Heart right ventricle (tissue), 16 donors: ENCODE measurements at regions of chr1 and their contacts with region 1.

Region 1: GRCh38 chr1:168439456-168440375 is 104.1 kb downstream of the XCL2 start:
- DNase-seq: peak; percentile 27 to 79
- ATAC-seq: peak; percentile 80 to 92 (median 90)
- H3K4me3 ChIP-seq: peak overlapping the region in 8 of 10 donors; percentile 5 to 38 (median 28)
- H3K27ac ChIP-seq: peak overlapping the region in 1 of 10 donors; percentile 54
- H3K4me1 ChIP-seq: peaks cover 0 to 13% (median 4%) of the 10 kb centered on the region in 9 donors
- H3K27me3 ChIP-seq: no peaks in the 10 kb centered on the region
- CTCF ChIP-seq: peak; percentile 36 to 85 (median 78)

Region 2: DNA sequence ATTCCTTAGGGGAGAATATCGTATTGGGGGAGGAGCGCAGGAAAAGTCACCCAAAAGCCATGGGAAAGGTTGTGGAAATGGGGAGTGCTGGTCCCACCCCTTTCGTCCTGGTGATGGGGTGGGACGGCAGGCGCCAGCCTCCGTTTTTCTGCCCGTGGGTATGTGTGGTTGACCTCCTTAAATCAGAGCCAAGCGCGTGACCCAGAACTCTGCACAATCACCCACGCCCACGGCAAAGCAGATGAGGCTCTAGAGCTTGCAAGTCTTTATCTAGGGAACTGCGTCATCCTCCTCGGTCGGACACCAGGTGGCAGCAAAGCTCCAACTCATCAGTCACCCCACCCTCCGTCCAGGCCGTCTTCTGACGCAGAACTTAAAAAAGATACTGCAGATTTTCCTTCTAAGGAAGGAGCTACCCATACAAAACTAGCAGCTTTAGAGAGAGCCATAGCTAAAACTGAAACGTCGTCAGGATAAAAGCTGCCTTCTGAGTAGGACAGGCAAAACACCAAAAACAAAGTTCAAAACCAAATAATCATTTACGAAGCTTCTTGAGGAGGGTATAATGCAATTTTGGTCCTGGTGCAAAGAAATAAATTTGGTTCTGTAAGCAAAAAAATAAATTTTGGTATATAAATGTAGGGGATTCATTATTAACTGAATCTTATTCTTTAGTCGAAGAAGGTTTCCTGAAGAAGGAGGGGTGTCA is 97.0 kb before region 1 on chr1:
- intact Hi-C with region 1: loop called in 5 of 10 experiments (anchors 2 to 10 kb)
- DNase-seq: peak; percentile 86 to 90
- ATAC-seq: peak; percentile 96 to 98 (median 98)
- H3K4me3 ChIP-seq: peak overlapping the region in 6 of 10 donors; percentile 30 to 37 (median 36)
- H3K27ac ChIP-seq: peak overlapping the region in 6 of 10 donors; percentile 24 to 66 (median 58)
- H3K4me1 ChIP-seq: peaks cover 0 to 33% (median 11%) of the 10 kb centered on the region in 9 donors
- H3K27me3 ChIP-seq: no peaks in the 10 kb centered on the region
- CTCF ChIP-seq: peak; percentile 68 to 90 (median 85)

Region 3: GRCh38 chr1:168567007-168567406 is 127.3 kb after region 1 on chr1:
- intact Hi-C with region 1: loop called in 8 of 10 experiments (anchors 2 to 10 kb)
- DNase-seq: no peak
- ATAC-seq: no peak
- H3K4me3 ChIP-seq: no peak overlapping the region
- H3K27ac ChIP-seq: no peak overlapping the region
- H3K4me1 ChIP-seq: no peaks in the 10 kb centered on the region
- H3K27me3 ChIP-seq: no peaks in the 10 kb centered on the region
- CTCF ChIP-seq: no peak

Region 4: DNA sequence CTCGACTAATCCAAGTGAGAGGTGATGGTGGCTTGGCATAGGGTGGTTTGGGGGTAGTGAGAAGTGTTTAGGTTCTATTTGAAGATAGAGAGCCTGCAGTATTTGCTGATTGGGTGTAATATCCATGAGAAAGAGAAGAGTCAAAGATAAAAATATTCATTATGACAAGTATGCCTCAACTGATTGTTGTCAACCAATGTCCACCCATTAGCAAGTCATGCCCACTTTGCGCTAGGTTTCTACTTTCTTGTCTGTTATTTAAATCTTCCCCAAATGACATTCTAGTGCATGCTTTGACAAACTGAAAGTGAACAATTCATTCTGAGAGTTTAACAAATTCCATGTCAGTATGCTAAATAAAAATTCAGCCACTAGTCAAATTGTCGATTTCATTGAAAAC is 132.9 kb after region 1 on chr1:
- intact Hi-C with region 1: loop called (anchors 2 to 10 kb)
- DNase-seq: no peak
- ATAC-seq: no peak
- H3K4me3 ChIP-seq: no peak overlapping the region
- H3K27ac ChIP-seq: no peak overlapping the region
- H3K4me1 ChIP-seq: no peaks in the 10 kb centered on the region
- H3K27me3 ChIP-seq: no peaks in the 10 kb centered on the region
- CTCF ChIP-seq: no peak

Region 5: DNA sequence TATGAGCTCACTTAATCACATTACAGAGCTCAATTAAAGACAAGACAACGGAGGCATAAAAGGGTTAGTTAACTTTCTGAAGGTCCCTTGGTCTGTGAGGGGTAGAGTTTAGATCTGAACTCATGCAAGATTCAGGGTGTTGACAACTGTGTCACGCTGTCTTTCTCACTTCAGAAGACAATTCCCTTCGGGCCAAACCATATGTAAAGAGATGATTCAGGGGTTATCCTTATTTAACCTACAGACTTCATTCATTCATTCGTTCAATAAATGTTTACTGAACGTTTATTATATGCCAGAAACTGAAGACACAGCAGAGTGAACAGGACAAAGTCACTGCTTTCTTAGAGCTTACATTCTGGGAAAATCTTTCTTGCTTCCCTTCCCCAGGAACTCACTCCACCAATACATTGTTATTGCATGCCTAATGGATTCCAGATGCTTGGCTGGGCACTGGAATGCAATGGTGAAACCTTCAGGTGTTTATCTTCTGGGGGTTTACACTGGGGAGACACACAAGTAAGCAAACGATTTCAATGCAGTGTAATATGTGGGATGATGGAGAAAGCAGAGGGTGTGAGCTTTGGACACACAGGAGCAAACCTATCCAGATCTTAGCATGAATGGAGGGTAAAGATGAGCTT is 143.1 kb after region 1 on chr1:
- intact Hi-C with region 1: loop called in 3 of 10 experiments (anchors 5 to 10 kb)
- DNase-seq: no peak
- ATAC-seq: no peak
- H3K4me3 ChIP-seq: no peak overlapping the region
- H3K27ac ChIP-seq: no peak overlapping the region
- H3K4me1 ChIP-seq: peaks cover 0 to 16% (median 6%) of the 10 kb centered on the region in 9 donors
- H3K27me3 ChIP-seq: no peaks in the 10 kb centered on the region
- CTCF ChIP-seq: no peak

Region 6: GRCh38 chr1:169106095-169106920 is 666.6 kb after region 1 on chr1 and contains the start of gene ATP1B1:
- intact Hi-C with region 1: no loop called
- DNase-seq: peak; percentile 80 to 89
- ATAC-seq: peak; percentile 76 to 91 (median 86)
- H3K4me3 ChIP-seq: peak within 1 kb of the TSS; percentile 66 to 98 (median 91)
- H3K27ac ChIP-seq: peak within 1 kb of the TSS; percentile 86 to 98 (median 94)
- H3K4me1 ChIP-seq: peaks cover 0 to 63% (median 28%) of the 10 kb centered on the region in 9 donors
- H3K27me3 ChIP-seq: peaks cover 0 to 12% (median 0%) of the 10 kb centered on the region in 7 donors
- CTCF ChIP-seq: peak; percentile 44 to 80 (median 66)
- total RNA-seq, gene ATP1B1: 245 to 472 (median 272) TPM